ENCODE measurements at regions of chr21 and their contacts with region 1.

Region 1: DNA sequence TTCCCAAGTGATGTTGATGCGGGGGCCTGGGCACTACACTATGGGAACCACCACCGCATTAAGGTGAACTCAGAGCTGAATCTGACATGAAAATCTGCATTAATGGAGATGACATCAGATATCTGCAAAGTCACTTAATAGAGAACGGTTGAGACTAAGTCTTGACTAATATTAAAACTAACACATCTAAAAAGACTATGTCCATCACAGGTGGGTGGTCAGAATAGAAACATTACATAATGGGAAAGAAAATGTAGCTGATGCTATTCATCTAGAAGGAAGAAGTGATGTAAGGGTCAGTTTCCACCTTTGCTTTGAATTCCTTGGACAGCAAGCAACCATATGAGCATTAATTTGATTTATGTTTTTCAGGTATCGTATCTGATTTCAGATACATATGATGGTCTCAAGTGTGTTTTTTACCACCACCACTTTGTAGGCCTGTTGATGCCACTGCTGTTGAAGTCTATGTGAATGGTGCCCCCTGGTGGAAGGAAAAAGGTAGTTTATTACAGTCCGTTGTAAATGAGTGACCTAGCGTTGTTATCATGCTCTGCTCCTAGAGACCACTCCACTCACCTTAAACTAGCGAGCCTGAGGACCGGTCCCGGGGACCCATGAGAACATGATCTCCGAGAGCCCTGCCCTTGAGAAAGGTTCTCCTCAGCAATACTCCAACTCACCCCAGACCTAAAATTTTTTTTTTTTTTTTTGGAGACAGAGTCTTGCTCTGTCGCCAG is 73.5 kb downstream of the BACH1 start:
- DNase-seq: no peak
- H3K4me3 ChIP-seq: no peak overlapping the region
- H3K27ac ChIP-seq: no peak overlapping the region
- H3K4me1 ChIP-seq: no peaks in the 10 kb centered on the region
- H3K27me3 ChIP-seq: no peaks in the 10 kb centered on the region
- CTCF ChIP-seq: peak; percentile 73 to 85 (median 76)
- EP300 ChIP-seq: no peak
- POLR2A ChIP-seq: no peak

Region 2: DNA sequence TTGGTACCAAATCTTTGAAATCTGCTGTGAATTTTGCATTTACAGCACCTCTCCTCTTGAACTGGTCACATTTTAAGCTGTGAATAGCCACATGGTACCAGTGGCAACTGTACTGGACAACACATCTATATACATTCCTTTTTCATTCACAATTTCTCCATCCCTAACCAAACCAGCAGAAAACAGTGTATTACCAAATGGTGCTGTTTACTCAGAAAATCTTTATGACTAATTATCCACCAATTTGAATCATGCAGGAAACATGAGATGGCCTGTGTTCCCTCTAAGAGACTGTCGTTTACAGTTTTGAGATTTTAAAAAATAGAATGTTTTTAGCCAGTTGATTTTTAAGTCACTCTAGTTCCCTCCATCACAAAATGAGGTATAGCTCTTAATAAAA is 281.2 kb before region 1 on chr21:
- intact Hi-C with region 1: loop called (anchors 2 kb)
- DNase-seq: no peak
- H3K4me3 ChIP-seq: no peak overlapping the region
- H3K27ac ChIP-seq: no peak overlapping the region
- H3K4me1 ChIP-seq: peaks cover 0 to 11% (median 5%) of the 10 kb centered on the region in 4 donors
- H3K27me3 ChIP-seq: no peaks in the 10 kb centered on the region
- CTCF ChIP-seq: no peak
- EP300 ChIP-seq: no peak
- POLR2A ChIP-seq: no peak

Region 3: DNA sequence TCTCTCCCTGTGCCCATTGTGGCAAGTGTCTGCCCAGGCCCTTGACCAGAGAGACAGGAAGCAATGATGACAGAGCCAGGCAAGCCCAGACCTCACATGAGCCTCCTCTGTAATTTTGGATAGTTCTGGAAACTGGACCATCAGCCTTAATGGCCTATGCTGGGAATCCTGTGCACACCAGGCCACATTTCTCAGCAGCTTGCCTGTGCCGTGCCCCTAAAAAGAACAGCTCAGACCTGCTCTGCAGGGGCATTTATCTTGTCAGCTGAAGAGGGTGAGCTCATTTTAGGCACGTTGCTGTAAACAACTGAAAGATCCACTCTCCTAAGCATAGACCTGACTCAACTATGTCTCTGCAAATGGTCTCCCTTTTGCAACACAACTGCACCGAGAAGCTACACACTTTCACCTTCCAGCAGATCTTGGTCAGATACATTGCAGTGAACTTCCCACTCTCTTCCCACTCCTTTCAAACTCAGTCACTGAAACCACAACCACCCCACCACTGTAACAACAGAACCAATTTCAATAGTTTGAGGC is 127.1 kb before region 1 on chr21:
- intact Hi-C with region 1: loop called (anchors 10 kb)
- DNase-seq: no peak
- H3K4me3 ChIP-seq: no peak overlapping the region
- H3K27ac ChIP-seq: peak overlapping the region in 1 of 4 donors; percentile 24
- H3K4me1 ChIP-seq: peaks cover 0 to 12% (median 3%) of the 10 kb centered on the region in 4 donors
- H3K27me3 ChIP-seq: no peaks in the 10 kb centered on the region
- CTCF ChIP-seq: no peak
- EP300 ChIP-seq: no peak
- POLR2A ChIP-seq: no peak

Region 4: DNA sequence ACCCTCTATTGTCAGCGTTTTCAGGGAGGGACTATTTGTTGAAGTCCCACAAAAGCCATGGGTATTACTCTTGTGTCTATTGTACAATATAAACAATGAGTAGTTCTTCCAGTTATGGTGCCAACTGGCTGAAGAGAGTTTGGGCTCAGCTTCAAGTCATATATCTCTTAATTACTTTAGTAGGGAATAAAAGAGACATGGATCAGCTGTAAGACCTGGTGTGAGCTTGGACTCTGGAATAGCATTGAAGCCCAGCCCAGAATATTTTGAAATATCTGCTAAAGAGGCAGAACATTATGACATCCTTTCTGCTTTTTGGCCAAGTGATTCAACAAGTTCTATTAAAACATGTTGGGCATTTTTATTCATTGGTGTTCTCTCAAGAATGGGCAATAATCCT is 151.4 kb after region 1 on chr21:
- intact Hi-C with region 1: no loop called
- DNase-seq: no peak
- H3K4me3 ChIP-seq: no peak overlapping the region
- H3K27ac ChIP-seq: no peak overlapping the region
- H3K4me1 ChIP-seq: peaks cover 0 to 14% (median 4%) of the 10 kb centered on the region in 4 donors
- H3K27me3 ChIP-seq: no peaks in the 10 kb centered on the region
- CTCF ChIP-seq: no peak
- EP300 ChIP-seq: no peak
- POLR2A ChIP-seq: no peak